GM12878 (cell line): ENCODE measurements at regions of chrX and their contacts with region 1.

Region 1: DNA sequence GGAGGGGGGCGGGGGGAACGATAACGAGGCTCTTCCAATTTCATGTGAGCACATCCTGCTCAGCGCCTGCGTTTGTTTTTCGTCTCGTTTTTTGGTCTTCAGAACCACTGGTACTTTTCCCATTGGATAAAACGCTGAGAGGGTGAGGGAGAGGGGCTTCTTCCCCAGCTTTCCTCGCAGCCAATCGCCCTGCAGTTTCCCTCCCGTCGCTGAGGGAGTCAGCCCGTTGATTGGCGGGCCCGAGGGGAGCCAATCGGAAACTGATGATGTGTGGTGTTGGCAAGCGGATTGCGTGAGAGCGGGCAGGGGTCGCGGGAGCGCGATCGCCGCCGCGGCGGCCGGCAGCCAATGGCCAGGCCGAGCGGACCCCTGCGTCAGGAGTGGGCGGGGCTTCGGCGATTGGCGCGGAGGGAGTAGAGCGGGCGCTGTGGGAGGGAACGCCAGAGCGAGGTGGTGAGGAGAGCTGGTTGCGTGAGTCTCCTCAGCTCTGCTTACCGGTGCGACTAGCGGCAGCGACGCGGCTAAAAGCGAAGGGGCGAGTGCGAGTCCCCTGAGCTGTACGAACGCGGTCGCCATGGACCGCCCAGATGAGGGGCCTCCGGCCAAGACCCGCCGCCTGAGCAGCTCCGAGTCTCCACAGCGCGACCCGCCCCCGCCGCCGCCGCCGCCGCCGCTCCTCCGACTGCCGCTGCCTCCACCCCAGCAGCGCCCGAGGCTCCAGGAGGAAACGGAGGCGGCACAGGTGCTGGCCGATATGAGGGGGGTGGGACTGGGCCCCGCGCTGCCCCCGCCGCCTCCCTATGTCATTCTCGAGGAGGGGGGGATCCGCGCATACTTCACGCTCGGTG is at the start of gene TSPYL2:
- DNase-seq: peak; percentile 79
- ATAC-seq: peak; percentile 96
- H3K4me3 ChIP-seq: peak within 1 kb of the TSS; percentile 73
- H3K27ac ChIP-seq: peak within 1 kb of the TSS; percentile 73
- H3K4me1 ChIP-seq: no peaks in the 10 kb centered on the region
- H3K27me3 ChIP-seq: no peaks in the 10 kb centered on the region
- CTCF ChIP-seq: no peak
- EP300 ChIP-seq: no peak
- POLR2A ChIP-seq: peak; percentile 100
- RAD21 ChIP-seq: no peak
- polyA plus RNA-seq, gene TSPYL2: 0.53 to 1.8 TPM

Region 2: DNA sequence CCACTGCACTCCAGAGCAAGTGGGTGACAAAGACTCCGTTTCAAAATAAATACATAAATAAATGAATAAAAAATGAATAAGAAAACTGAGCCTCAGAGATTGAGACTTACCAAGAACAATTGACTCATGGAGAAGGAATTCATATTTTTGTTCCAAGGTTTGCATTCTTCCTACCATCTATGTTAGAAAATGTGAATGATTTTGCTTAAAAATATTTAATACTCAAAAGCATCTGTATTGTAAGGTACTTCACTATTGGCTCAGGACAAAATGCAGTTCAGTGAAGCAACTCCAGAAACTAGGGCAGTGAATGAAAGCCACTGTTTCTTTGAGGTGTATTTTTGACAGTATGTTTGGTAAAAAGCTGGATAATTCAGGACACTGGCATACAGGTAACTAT is 659.3 kb before region 1 on chrX:
- CTCF ChIA-PET with region 1: no interaction called
- POLR2A ChIA-PET with region 1: no interaction called
- RAD21 ChIA-PET with region 1: no interaction called
- SMC1A ChIA-PET with region 1: no interaction called
- in situ Hi-C with region 1: no loop called
- intact Hi-C with region 1: no loop called
- DNase-seq: no peak
- ATAC-seq: no peak
- H3K4me3 ChIP-seq: no peak overlapping the region
- H3K27ac ChIP-seq: no peak overlapping the region
- H3K4me1 ChIP-seq: no peaks in the 10 kb centered on the region
- H3K27me3 ChIP-seq: peaks cover 0 to 2% of the 10 kb centered on the region in 2 experiments; a peak in 1 of 4 replicates
- CTCF ChIP-seq: no peak
- EP300 ChIP-seq: no peak
- POLR2A ChIP-seq: no peak
- RAD21 ChIP-seq: no peak

Region 3: DNA sequence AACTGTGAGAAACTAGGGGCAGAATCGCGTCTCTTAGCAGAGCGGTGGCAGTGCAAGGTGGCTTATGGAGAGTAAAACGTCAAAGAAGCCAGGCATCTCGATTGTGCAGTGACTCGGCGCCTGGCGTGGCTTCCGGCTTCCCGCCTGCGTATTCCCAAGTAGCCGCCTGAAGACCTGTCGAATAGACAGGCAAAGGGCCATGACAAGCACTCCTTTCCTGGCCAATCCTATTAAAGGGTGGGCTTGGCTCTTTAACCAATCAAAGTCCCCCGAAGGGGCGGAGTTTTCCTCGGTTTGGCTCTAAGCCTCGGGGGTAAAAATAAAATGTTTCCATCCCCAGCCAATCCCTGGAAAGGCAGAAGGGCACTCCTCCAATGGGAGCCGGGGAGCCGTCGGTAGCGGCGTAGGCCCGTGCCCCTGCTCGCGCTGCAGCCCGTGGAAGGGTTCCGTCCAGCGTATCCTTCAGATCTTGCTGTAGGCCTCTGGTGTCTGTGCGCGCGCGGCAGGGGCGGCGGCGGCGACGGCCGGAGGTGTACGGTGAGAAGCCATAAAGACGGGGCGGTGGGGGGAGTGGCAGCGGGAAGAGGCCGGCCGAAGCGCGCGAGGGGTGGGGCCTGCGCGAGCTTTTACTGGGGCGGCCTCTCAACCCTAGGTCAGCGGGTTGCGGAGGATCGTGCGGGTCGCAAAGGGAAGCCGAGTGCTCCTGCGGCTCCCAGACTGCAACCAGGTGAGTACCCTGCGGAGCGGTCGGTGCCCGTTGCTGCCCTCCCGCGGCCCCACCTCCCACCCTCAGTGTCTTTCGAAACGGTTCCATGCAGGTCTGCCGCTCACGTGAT is 11.8 kb after region 1 on chrX and contains the start of gene KANTR:
- CTCF ChIA-PET with region 1: no interaction called
- POLR2A ChIA-PET with region 1: interaction called, 5 read pairs
- RAD21 ChIA-PET with region 1: no interaction called
- SMC1A ChIA-PET with region 1: no interaction called
- in situ Hi-C with region 1: no loop called
- intact Hi-C with region 1: loop called (anchors 1 kb)
- DNase-seq: peak; percentile 73
- ATAC-seq: peak; percentile 92
- H3K4me3 ChIP-seq: peak within 1 kb of the TSS; percentile 71
- H3K27ac ChIP-seq: peak within 1 kb of the TSS; percentile 45
- H3K4me1 ChIP-seq: no peaks in the 10 kb centered on the region
- H3K27me3 ChIP-seq: no peaks in the 10 kb centered on the region
- CTCF ChIP-seq: no peak
- EP300 ChIP-seq: no peak
- POLR2A ChIP-seq: peak; percentile 65
- RAD21 ChIP-seq: no peak
- polyA plus RNA-seq, gene KANTR: 1.00 to 1.1 TPM

Region 4: DNA sequence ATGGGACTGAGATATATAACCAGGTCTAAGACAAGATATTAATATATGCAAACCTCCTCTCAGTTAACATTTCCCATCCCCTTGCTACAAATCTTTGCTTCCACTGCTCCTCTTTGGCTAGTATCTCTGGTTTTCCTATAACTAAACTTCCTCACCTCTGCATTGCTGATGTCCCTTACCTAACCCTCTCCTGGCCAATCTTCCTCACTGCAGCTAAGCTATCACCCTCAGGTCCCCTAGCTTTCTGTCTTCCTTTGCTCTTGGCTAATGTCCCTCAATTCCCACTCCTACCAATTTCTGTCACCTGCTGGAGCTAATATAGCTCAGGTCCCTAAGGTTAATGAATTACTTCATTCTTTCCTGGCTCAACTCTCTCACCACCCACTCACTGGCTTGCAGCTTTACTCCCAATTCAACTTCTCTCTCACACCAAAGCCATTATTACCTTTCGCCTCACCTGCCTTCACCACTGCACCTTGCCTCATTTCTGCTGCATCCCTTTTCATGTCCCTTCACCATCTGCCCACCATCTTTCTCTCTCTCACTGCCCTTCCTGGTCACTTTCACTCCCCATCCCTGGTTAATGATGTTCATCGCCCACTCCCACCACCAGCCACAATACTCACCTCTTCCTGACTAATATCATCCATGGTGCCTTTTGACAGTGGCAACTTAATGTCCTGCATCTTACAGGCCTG is 313.6 kb after region 1 on chrX:
- CTCF ChIA-PET with region 1: no interaction called
- POLR2A ChIA-PET with region 1: no interaction called
- RAD21 ChIA-PET with region 1: no interaction called
- SMC1A ChIA-PET with region 1: no interaction called
- in situ Hi-C with region 1: no loop called
- intact Hi-C with region 1: no loop called
- DNase-seq: no peak
- ATAC-seq: no peak; the same call in 2 of the 3 replicates
- H3K4me3 ChIP-seq: no peak overlapping the region
- H3K27ac ChIP-seq: no peak overlapping the region
- H3K4me1 ChIP-seq: no peaks in the 10 kb centered on the region
- H3K27me3 ChIP-seq: no peaks in the 10 kb centered on the region
- CTCF ChIP-seq: no peak
- EP300 ChIP-seq: no peak
- POLR2A ChIP-seq: no peak
- RAD21 ChIP-seq: no peak